ENCODE measurements at regions of chr1 and their contacts with region 1.

Region 1: GRCh38 chr1:109984456-109985275 is at the start of gene AHCYL1:
- DNase-seq: peak; percentile 99
- ATAC-seq: peak; percentile 100
- H3K4me3 ChIP-seq: peak within 1 kb of the TSS; percentile 59 to 88 (median 82)
- H3K4me3 Mint-ChIP-seq: peak within 1 kb of the TSS; percentile 99
- H3K27ac ChIP-seq: peak within 1 kb of the TSS; percentile 72 to 92
- H3K27ac Mint-ChIP-seq: peak within 1 kb of the TSS; percentile 98
- H3K4me1 ChIP-seq: peaks cover 22 to 23% of the 10 kb centered on the region in 2 donors
- H3K4me1 Mint-ChIP-seq: peaks cover 47% of the 10 kb centered on the region
- H3K27me3 ChIP-seq: no peaks in the 10 kb centered on the region
- H3K27me3 Mint-ChIP-seq: no peaks in the 10 kb centered on the region
- CTCF ChIP-seq: peak; percentile 93
- total RNA-seq, gene AHCYL1: 51.4 and 58.7 TPM in 2 replicates

Region 2: DNA sequence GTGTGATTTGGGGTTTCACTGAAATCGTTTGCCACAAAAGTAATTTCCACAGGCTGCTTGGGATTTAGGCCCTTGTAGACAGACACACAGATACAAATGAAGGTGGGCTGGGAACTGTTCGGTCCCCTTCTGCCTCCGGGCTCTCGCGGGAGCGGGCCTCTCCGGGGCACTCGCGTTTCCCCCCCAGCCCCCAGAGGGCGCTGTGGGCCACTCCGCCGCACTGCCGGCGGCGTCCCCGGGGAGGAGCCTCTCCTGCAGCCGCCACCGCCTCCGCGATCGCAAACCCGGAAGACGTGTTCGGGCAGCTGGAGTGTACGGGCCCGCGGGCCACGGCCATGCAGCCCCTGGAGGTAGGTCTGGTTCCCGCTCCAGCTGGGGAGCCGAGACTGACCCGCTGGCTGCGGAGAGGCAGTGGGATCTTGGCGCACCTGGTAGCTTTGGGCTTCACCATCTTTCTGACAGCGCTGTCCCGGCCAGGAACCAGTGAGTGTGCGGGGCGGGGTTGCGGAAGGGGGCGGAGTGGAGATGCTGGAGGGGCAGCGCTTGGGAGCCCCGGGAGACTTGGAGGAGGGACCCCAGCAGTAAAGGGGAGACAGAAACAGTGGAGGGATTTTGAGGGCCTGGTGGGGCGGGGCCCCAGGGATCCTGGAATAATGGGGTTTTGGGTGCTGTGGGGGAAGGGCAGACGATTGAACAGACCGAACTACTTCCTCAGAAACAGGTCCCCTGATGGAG is 490.7 kb before region 1 on chr1 and contains the start of gene CYB561D1:
- CTCF ChIA-PET with region 1: interaction called, 3 read pairs
- POLR2A ChIA-PET with region 1: no interaction called
- intact Hi-C with region 1: loop called (anchors 5 kb)
- DNase-seq: peak; percentile 94
- ATAC-seq: peak; percentile 89
- H3K4me3 ChIP-seq: peak within 1 kb of the TSS; percentile 48 to 97 (median 88)
- H3K4me3 Mint-ChIP-seq: peak within 1 kb of the TSS; percentile 97
- H3K27ac ChIP-seq: peak within 1 kb of the TSS; percentile 14 to 46
- H3K27ac Mint-ChIP-seq: peak within 1 kb of the TSS; percentile 93
- H3K4me1 ChIP-seq: peaks cover 16 to 33% of the 10 kb centered on the region in 2 donors
- H3K4me1 Mint-ChIP-seq: peaks cover 40% of the 10 kb centered on the region
- H3K27me3 ChIP-seq: no peaks in the 10 kb centered on the region
- H3K27me3 Mint-ChIP-seq: no peaks in the 10 kb centered on the region
- CTCF ChIP-seq: peak; percentile 91
- total RNA-seq, gene CYB561D1: 28.0 and 29.0 TPM in 2 replicates

Region 3: DNA sequence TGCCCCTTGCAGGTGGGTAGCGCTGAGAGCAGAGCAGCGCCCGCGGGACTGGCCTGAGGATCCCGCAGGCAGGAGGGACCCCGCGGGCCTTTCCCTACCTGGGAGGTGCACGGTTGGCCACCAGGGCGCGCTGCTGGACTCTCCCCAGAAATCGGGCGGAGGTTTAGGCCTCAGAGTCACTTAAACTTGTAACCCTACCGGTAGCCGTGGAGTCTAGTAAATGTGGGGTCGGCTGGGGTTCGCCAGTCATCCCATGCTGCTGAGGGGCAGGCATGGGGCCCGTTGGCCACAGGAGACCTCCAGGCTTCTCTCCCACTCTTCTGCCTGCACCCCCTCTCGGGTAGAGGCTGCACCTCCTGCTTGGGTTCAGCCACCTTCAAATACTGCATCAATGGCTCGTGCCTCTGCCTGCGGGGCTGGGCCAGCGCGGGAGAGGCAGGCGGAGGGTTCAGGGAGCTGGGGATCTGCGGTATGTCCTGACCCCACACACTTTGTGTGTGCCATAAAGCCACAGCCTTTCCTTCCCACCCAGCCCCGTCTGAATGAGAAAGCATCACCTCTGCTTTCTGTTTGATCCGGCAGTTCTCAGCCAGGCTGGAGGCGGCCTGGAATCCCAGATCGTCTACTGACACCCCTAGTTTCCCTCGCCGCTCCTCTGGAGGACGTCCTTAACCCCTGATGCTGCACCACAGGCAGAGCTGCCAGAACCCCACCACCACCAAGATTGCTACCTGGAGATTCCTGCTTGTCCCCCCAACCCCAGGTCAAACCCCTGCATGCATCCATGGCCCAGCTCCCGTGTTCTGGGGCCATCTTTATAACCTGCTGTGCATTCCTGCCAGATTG is 341.1 kb before region 1 on chr1:
- CTCF ChIA-PET with region 1: interaction called, 97 read pairs
- POLR2A ChIA-PET with region 1: interaction called, 5 read pairs
- intact Hi-C with region 1: loop called (anchors 1 kb)
- DNase-seq: peak; percentile 86
- ATAC-seq: peak; percentile 88
- H3K4me3 ChIP-seq: peak overlapping the region in 1 of 5 experiments; percentile 6
- H3K4me3 Mint-ChIP-seq: peak overlapping the region; percentile 7
- H3K27ac ChIP-seq: no peak overlapping the region
- H3K27ac Mint-ChIP-seq: no peak overlapping the region
- H3K4me1 ChIP-seq: peaks cover 4 to 14% of the 10 kb centered on the region in 2 donors
- H3K4me1 Mint-ChIP-seq: peaks cover 13% of the 10 kb centered on the region
- H3K27me3 ChIP-seq: peaks cover 0 to 2% (median 0%) of the 10 kb centered on the region in 4 experiments
- H3K27me3 Mint-ChIP-seq: peaks cover 4% of the 10 kb centered on the region
- CTCF ChIP-seq: peak; percentile 92

Region 4: GRCh38 chr1:109739738-109740660 is 244.7 kb before region 1 on chr1:
- CTCF ChIA-PET with region 1: interaction called, 5 read pairs
- POLR2A ChIA-PET with region 1: no interaction called
- intact Hi-C with region 1: loop called (anchors 1 kb)
- DNase-seq: peak; percentile 83
- ATAC-seq: peak; percentile 97
- H3K4me3 ChIP-seq: peak overlapping the region; percentile 27 to 65 (median 62)
- H3K4me3 Mint-ChIP-seq: peak overlapping the region; percentile 89
- H3K27ac ChIP-seq: no peak overlapping the region
- H3K27ac Mint-ChIP-seq: peak overlapping the region; percentile 54
- H3K4me1 ChIP-seq: peaks cover 11 to 16% of the 10 kb centered on the region in 2 donors
- H3K4me1 Mint-ChIP-seq: peaks cover 17% of the 10 kb centered on the region
- H3K27me3 ChIP-seq: peaks cover 0 to 44% (median 18%) of the 10 kb centered on the region in 4 experiments
- H3K27me3 Mint-ChIP-seq: peaks cover 41% of the 10 kb centered on the region
- CTCF ChIP-seq: no peak

Region 5: DNA sequence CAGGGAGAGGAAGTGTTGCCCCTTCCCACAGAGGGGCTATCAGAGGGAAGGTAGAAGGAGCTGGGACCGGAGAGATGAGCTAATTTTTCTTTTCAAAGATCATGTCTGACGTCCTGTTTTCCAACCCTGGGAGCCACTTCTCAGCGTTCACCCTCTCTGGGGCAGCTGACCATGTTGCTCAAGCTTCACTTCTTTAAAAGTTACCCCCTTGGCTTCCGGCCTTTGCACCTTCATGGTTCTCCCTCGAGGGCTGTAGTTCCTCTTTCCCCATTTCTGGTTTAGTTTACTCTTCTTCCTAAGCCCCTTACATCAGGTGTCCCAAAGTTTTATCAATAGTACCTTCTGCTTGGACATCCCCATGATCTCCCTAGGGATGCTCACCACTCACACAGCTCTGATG is 97.8 kb before region 1 on chr1:
- CTCF ChIA-PET with region 1: interaction called, 11 read pairs
- POLR2A ChIA-PET with region 1: no interaction called
- intact Hi-C with region 1: no loop called
- DNase-seq: peak; percentile 83
- ATAC-seq: peak; percentile 89
- H3K4me3 ChIP-seq: peak overlapping the region in 3 of 5 experiments; percentile 16 to 49 (median 17)
- H3K4me3 Mint-ChIP-seq: peak overlapping the region; percentile 70
- H3K27ac ChIP-seq: peak overlapping the region; percentile 74
- H3K27ac Mint-ChIP-seq: peak overlapping the region; percentile 93
- H3K4me1 ChIP-seq: peaks cover 34 to 41% of the 10 kb centered on the region in 2 donors
- H3K4me1 Mint-ChIP-seq: peaks cover 55% of the 10 kb centered on the region
- H3K27me3 ChIP-seq: peaks cover 0 to 15% (median 0%) of the 10 kb centered on the region in 4 experiments
- H3K27me3 Mint-ChIP-seq: peaks cover 7% of the 10 kb centered on the region
- CTCF ChIP-seq: no peak

Region 6: GRCh38 chr1:110034451-110035235 is 50.0 kb after region 1 on chr1 and contains the start of gene STRIP1:
- CTCF ChIA-PET with region 1: interaction called, 28 read pairs
- POLR2A ChIA-PET with region 1: no interaction called
- intact Hi-C with region 1: loop called (anchors 1 kb)
- DNase-seq: peak; percentile 96
- ATAC-seq: peak; percentile 93
- H3K4me3 ChIP-seq: peak within 1 kb of the TSS; percentile 71 to 99 (median 93)
- H3K4me3 Mint-ChIP-seq: peak within 1 kb of the TSS; percentile 97
- H3K27ac ChIP-seq: peak within 1 kb of the TSS; percentile 76 to 95
- H3K27ac Mint-ChIP-seq: peak within 1 kb of the TSS; percentile 93
- H3K4me1 ChIP-seq: peaks cover 25 to 31% of the 10 kb centered on the region in 2 donors
- H3K4me1 Mint-ChIP-seq: peaks cover 43% of the 10 kb centered on the region
- H3K27me3 ChIP-seq: no peaks in the 10 kb centered on the region
- H3K27me3 Mint-ChIP-seq: no peaks in the 10 kb centered on the region
- CTCF ChIP-seq: no peak
- total RNA-seq, gene STRIP1: 97.5 and 105 TPM in 2 replicates

Region 7: DNA sequence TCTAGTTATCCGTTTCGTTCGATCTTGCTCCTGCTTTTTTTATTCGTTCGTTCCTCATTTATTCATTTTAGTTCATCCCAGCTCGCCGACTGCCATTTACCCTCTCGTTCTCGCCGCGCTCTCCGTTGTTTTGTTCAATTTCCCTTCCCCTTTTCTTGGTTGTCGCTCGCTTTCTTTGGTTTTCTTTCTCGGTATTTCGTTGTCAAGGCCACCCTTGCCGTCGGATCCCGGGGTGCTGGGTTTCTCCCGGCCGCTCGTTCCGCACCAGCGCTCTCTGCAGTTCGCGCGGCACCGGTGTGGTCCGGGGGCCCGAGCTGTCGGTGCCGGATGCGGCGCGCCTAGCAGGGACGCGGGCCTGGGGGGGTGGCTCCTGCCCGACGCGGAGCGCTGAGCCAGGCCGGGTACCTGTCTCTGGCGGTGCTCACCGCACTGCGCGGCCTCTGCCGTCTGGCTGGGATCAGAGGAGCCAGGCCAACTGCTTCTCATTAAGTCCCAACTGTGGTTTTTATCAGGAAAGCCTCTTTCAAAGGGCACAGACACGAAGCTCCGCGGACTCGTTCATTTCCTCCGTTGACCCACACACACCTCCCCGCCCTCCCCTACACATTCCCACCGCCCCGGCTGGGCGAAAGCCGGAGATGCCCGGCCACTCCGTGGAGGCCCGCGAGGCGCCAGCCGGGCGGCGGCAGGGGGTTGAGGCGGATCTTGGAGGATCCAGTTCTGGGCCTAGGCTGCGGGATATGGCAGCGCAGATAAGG is 84.2 kb after region 1 on chr1:
- CTCF ChIA-PET with region 1: no interaction called
- POLR2A ChIA-PET with region 1: no interaction called
- intact Hi-C with region 1: no loop called
- DNase-seq: peak; percentile 78
- ATAC-seq: peak; percentile 47
- H3K4me3 ChIP-seq: peak overlapping the region; percentile 9 to 61 (median 47)
- H3K4me3 Mint-ChIP-seq: peak overlapping the region; percentile 94
- H3K27ac ChIP-seq: no peak overlapping the region
- H3K27ac Mint-ChIP-seq: peak overlapping the region; percentile 71
- H3K4me1 ChIP-seq: peaks cover 34 to 40% of the 10 kb centered on the region in 2 donors
- H3K4me1 Mint-ChIP-seq: peaks cover 25% of the 10 kb centered on the region
- H3K27me3 ChIP-seq: peaks cover 0 to 64% (median 44%) of the 10 kb centered on the region in 4 experiments
- H3K27me3 Mint-ChIP-seq: peaks cover 62% of the 10 kb centered on the region
- CTCF ChIP-seq: no peak

Region 8: GRCh38 chr1:110196917-110197765 is 212.5 kb after region 1 on chr1:
- CTCF ChIA-PET with region 1: no interaction called
- POLR2A ChIA-PET with region 1: no interaction called
- intact Hi-C with region 1: no loop called
- DNase-seq: peak; percentile 71
- ATAC-seq: peak; percentile 93
- H3K4me3 ChIP-seq: no peak overlapping the region
- H3K4me3 Mint-ChIP-seq: no peak overlapping the region
- H3K27ac ChIP-seq: no peak overlapping the region
- H3K27ac Mint-ChIP-seq: no peak overlapping the region
- H3K4me1 ChIP-seq: no peaks in the 10 kb centered on the region
- H3K4me1 Mint-ChIP-seq: no peaks in the 10 kb centered on the region
- H3K27me3 ChIP-seq: peaks cover 0 to 3% (median 0%) of the 10 kb centered on the region in 4 experiments
- H3K27me3 Mint-ChIP-seq: peaks cover 4% of the 10 kb centered on the region
- CTCF ChIP-seq: peak; percentile 97

Region 9: GRCh38 chr1:110235834-110236682 is 251.4 kb after region 1 on chr1:
- CTCF ChIA-PET with region 1: no interaction called
- POLR2A ChIA-PET with region 1: no interaction called
- intact Hi-C with region 1: no loop called
- DNase-seq: no peak
- ATAC-seq: no peak
- H3K4me3 ChIP-seq: no peak overlapping the region
- H3K4me3 Mint-ChIP-seq: no peak overlapping the region
- H3K27ac ChIP-seq: no peak overlapping the region
- H3K27ac Mint-ChIP-seq: no peak overlapping the region
- H3K4me1 ChIP-seq: peaks cover 0 to 12% of the 10 kb centered on the region in 2 donors
- H3K4me1 Mint-ChIP-seq: peaks cover 9% of the 10 kb centered on the region
- H3K27me3 ChIP-seq: no peaks in the 10 kb centered on the region
- H3K27me3 Mint-ChIP-seq: no peaks in the 10 kb centered on the region
- CTCF ChIP-seq: no peak

Measured in B cell (primary cell).